Activated B cell treated with CpG ODN at 0.5 μM for 24 hours (primary cell): ENCODE measurements at regions of chr15 and their contacts with region 1.

Region 1: DNA sequence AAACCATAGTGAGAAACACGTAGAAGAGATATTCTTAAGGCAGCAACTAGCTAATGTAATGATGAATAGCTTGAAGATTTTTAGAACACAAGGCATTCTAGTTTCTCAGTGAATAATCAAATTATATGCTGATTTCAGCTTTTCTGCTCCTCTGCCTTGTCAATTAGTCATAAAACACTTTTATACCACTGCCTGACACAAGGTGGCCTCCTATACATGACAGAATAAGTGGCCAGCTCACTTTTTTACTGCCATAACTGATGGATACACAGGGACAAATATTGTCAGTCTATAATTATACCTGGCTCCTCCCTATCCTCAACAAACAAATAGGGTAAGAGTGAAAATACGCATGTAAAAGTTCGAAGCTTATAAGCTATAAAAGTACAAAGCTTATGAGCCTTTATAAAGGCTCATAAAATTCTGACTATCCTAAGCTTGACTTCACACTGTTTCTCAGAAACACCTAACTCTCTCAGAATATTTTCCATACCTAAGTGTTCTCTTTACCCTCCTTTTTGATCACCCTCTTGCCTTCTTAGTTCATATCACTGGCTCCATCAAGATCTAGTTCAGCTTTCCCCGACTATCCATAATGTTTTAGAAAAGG is 81.6 kb downstream of the HERC1 start:
- DNase-seq: no peak
- ATAC-seq: peak; percentile 83
- H3K4me3 Mint-ChIP-seq: no peak overlapping the region
- H3K27ac Mint-ChIP-seq: peak overlapping the region; percentile 59
- H3K4me1 Mint-ChIP-seq: peaks cover 3% of the 10 kb centered on the region
- H3K27me3 Mint-ChIP-seq: no peaks in the 10 kb centered on the region
- CTCF ChIP-seq: no peak

Region 2: DNA sequence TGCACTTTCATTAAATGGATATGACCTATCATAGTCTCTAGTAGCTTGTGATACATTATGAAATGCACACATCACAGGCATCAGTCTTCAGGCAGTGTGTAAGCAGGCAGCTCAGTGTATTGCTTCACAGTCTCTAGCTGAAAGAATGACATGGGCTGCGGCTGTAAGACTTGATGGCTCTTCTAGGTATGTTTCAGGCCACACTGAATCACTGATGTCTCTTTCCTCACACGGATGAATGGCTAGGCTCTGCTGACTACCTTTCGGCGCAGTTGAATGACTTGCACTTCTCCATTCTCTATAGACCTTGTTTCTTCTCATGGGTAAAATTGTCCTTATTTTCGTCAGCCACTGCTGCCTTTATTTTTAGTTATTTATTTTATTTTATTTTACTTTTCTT is 459.4 kb before region 1 on chr15:
- CTCF ChIA-PET with region 1: no interaction called
- POLR2A ChIA-PET with region 1: no interaction called
- intact Hi-C with region 1: no loop called
- DNase-seq: no peak
- ATAC-seq: peak; percentile 90
- H3K4me3 Mint-ChIP-seq: no peak overlapping the region
- H3K27ac Mint-ChIP-seq: peak overlapping the region; percentile 24
- H3K4me1 Mint-ChIP-seq: peaks cover 19% of the 10 kb centered on the region
- H3K27me3 Mint-ChIP-seq: no peaks in the 10 kb centered on the region
- CTCF ChIP-seq: no peak

Region 3: GRCh38 chr15:63826528-63826927 is 74.3 kb after region 1 on chr15:
- CTCF ChIA-PET with region 1: interaction called, 22 read pairs
- POLR2A ChIA-PET with region 1: no interaction called
- intact Hi-C with region 1: no loop called
- DNase-seq: no peak
- ATAC-seq: peak; percentile 49
- H3K4me3 Mint-ChIP-seq: no peak overlapping the region
- H3K27ac Mint-ChIP-seq: no peak overlapping the region
- H3K4me1 Mint-ChIP-seq: peaks cover 63% of the 10 kb centered on the region
- H3K27me3 Mint-ChIP-seq: no peaks in the 10 kb centered on the region
- CTCF ChIP-seq: no peak

Region 4: GRCh38 chr15:63945007-63945788 is 193.0 kb after region 1 on chr15:
- CTCF ChIA-PET with region 1: interaction called, 14 read pairs
- POLR2A ChIA-PET with region 1: no interaction called
- intact Hi-C with region 1: loop called (anchors 1 kb)
- DNase-seq: peak; percentile 52
- ATAC-seq: peak; percentile 89
- H3K4me3 Mint-ChIP-seq: no peak overlapping the region
- H3K27ac Mint-ChIP-seq: no peak overlapping the region
- H3K4me1 Mint-ChIP-seq: peaks cover 31% of the 10 kb centered on the region
- H3K27me3 Mint-ChIP-seq: no peaks in the 10 kb centered on the region
- CTCF ChIP-seq: peak; percentile 70